Caco-2 (cell line): ENCODE measurements at regions of chr11 and their contacts with region 1.

Region 1: DNA sequence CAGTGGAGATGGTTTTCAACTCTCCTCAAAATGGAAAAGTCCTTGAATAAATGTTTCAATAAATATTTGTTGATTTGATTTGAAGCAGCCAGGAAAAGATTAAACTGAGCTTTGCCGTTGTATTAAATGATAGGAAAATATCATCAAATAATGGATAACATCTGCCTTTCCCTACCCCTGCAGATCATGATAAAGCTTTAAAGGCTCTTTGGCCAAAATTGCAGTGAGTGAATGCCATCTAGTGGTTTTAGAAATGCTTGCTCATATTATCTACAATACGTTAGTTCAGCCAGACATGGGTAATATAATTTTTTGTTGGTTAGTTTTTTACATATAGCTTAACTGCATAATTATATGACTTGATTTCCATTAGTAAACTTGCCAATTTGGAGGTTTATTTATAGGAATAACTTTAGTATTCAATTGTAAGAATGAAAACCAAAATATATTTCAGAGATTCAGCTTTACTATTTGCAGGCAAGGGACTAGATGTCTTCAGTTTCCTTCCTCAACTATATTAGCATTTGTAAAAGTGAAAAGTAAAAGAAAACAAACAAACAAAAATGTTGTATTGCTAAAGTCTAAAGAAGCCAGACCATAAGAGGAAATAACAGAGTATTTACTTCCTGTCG is 159.2 kb downstream of the MSANTD4 start:
- DNase-seq: peak in 1 of 2 experiments; percentile 50
- H3K4me3 ChIP-seq: no peak overlapping the region
- H3K4me3 Mint-ChIP-seq: no peak overlapping the region
- H3K27ac Mint-ChIP-seq: no peak overlapping the region
- H3K4me1 ChIP-seq: no peaks in the 10 kb centered on the region
- H3K4me1 Mint-ChIP-seq: no peaks in the 10 kb centered on the region
- H3K27me3 ChIP-seq: no peaks in the 10 kb centered on the region
- H3K27me3 Mint-ChIP-seq: peaks cover 2% of the 10 kb centered on the region
- CTCF ChIP-seq: peak; percentile 77 to 84

Region 2: GRCh38 chr11:104254347-104254746 is 1608.5 kb before region 1 on chr11:
- CTCF ChIA-PET with region 1: no interaction called
- POLR2A ChIA-PET with region 1: no interaction called
- intact Hi-C with region 1: loop called (anchors 2 kb)
- DNase-seq: peak; percentile 59 to 67
- H3K4me3 ChIP-seq: no peak overlapping the region
- H3K4me3 Mint-ChIP-seq: no peak overlapping the region
- H3K27ac Mint-ChIP-seq: no peak overlapping the region
- H3K4me1 ChIP-seq: peaks cover 6% of the 10 kb centered on the region
- H3K4me1 Mint-ChIP-seq: peaks cover 16% of the 10 kb centered on the region
- H3K27me3 ChIP-seq: no peaks in the 10 kb centered on the region
- H3K27me3 Mint-ChIP-seq: no peaks in the 10 kb centered on the region
- CTCF ChIP-seq: peak; percentile 63 to 73

Region 3: DNA sequence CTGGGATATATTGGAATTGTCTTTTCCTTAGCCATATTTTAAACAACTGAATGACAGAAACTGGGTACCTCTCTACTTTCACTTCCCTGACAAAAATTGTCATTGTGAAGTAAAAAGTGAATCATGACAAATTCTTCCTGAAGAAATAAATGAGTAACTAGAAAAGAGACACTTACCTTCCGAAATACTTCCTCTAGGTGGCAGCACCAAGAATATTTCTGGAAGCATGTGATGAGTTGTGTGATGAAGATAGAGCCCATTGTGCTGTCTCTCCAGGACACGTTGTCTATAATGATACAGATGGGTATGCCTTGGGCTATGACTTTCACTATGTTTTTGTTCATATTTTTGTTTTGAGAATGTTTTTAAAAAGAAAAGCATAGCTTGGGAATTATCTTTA is 915.9 kb before region 1 on chr11:
- CTCF ChIA-PET with region 1: no interaction called
- POLR2A ChIA-PET with region 1: no interaction called
- intact Hi-C with region 1: loop called (anchors 1 kb)
- DNase-seq: peak in 1 of 2 experiments; percentile 72
- H3K4me3 ChIP-seq: no peak overlapping the region
- H3K4me3 Mint-ChIP-seq: no peak overlapping the region
- H3K27ac Mint-ChIP-seq: no peak overlapping the region
- H3K4me1 ChIP-seq: no peaks in the 10 kb centered on the region
- H3K4me1 Mint-ChIP-seq: peaks cover 6% of the 10 kb centered on the region
- H3K27me3 ChIP-seq: no peaks in the 10 kb centered on the region
- H3K27me3 Mint-ChIP-seq: no peaks in the 10 kb centered on the region
- CTCF ChIP-seq: peak; percentile 54 to 74

Region 4: GRCh38 chr11:105368711-105369110 is 494.1 kb before region 1 on chr11:
- CTCF ChIA-PET with region 1: no interaction called
- POLR2A ChIA-PET with region 1: no interaction called
- intact Hi-C with region 1: loop called (anchors 10 kb)
- DNase-seq: peak; percentile 67 to 78
- H3K4me3 ChIP-seq: no peak overlapping the region
- H3K4me3 Mint-ChIP-seq: peak overlapping the region; percentile 0
- H3K27ac Mint-ChIP-seq: peak overlapping the region; percentile 22
- H3K4me1 ChIP-seq: peaks cover 31% of the 10 kb centered on the region
- H3K4me1 Mint-ChIP-seq: peaks cover 11% of the 10 kb centered on the region
- H3K27me3 ChIP-seq: no peaks in the 10 kb centered on the region
- H3K27me3 Mint-ChIP-seq: no peaks in the 10 kb centered on the region
- CTCF ChIP-seq: no peak